Activated CD8-positive, alpha-beta memory T cell treated with anti-CD3 and anti-CD28 coated beads, Interleukin-2, amount 10 ng/mL, durations not matched to agents 7 days and 5 days (primary cell): ENCODE measurements at regions of chr9 and their contacts with region 1.

Region 1: GRCh38 chr9:120985810-120986222 is 59.2 kb upstream of the TRAF1 start:
- DNase-seq: no peak
- ATAC-seq: no peak
- H3K4me3 Mint-ChIP-seq: no peak overlapping the region
- H3K27ac Mint-ChIP-seq: no peak overlapping the region
- H3K4me1 Mint-ChIP-seq: peaks cover 2% of the 10 kb centered on the region
- H3K27me3 Mint-ChIP-seq: peaks cover 7% of the 10 kb centered on the region

Region 2: DNA sequence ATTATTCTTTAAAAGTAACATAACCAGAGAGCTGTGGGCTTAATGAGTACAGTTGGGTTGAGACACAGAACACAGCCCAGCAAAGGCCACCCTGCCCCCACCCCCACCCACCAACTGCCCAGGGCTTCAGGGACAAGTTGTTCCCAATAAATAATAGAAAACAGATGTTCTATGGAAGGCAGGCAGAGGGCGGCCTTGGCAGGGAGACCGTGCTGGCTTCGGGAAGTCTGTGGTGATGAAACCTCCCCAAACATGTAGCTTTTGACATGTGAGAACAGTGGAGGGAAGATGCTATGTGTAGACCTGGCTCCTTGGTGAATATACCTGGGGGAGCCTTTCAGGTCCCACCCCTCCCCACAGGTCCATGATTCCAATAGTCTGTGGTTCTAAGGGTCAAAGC is 69.2 kb before region 1 on chr9:
- CTCF ChIA-PET with region 1: no interaction called
- DNase-seq: no peak
- ATAC-seq: no peak
- H3K4me3 Mint-ChIP-seq: peak overlapping the region; percentile 37
- H3K27ac Mint-ChIP-seq: peak overlapping the region; percentile 79
- H3K4me1 Mint-ChIP-seq: peaks cover 84% of the 10 kb centered on the region
- H3K27me3 Mint-ChIP-seq: no peaks in the 10 kb centered on the region

Region 3: GRCh38 chr9:121071756-121072421 is 86.1 kb after region 1 on chr9:
- CTCF ChIA-PET with region 1: interaction called, 22 read pairs
- DNase-seq: peak; percentile 62
- ATAC-seq: no peak
- H3K4me3 Mint-ChIP-seq: peak overlapping the region; percentile 82
- H3K27ac Mint-ChIP-seq: peak overlapping the region; percentile 95
- H3K4me1 Mint-ChIP-seq: peaks cover 60% of the 10 kb centered on the region
- H3K27me3 Mint-ChIP-seq: no peaks in the 10 kb centered on the region

Region 4: DNA sequence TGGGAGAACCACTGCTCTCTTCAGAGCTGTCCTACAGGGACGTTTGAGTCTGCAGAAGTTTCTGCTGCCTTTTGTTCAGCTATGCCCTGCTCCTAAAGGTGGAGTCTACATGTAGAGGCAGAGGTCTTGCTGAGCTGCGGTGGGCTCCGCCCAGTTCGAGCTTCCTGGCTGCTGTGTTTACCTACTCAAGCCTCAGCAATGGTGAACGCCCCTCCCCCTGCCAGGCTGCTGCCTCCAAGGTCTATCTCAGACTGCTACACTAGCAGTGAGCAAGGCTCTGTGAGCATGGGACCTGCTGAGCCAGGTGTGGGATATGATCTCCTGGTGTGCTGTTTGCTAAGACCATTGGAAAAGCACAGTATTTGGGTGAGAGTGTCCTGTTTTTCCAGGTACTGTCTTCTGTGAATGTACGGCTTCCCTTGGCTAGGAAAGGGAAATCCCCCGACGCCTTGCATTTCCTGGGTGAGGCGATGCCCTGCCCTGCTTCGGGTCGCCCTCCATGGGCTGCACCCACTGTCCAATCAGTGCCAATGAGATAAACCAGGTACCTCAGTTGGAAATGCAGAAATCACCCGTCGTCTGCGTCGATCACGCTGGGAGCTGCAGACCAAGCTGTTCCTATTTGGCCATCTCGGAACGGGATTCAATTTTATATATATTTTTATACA is 147.5 kb after region 1 on chr9:
- CTCF ChIA-PET with region 1: no interaction called
- DNase-seq: peak; percentile 90
- ATAC-seq: peak; percentile 99
- H3K4me3 Mint-ChIP-seq: peak overlapping the region; percentile 15
- H3K27ac Mint-ChIP-seq: peak overlapping the region; percentile 67
- H3K4me1 Mint-ChIP-seq: peaks cover 48% of the 10 kb centered on the region
- H3K27me3 Mint-ChIP-seq: no peaks in the 10 kb centered on the region